CD4-positive, alpha-beta T cell (primary cell): ENCODE measurements at regions of chr5 and their contacts with region 1.

Region 1: DNA sequence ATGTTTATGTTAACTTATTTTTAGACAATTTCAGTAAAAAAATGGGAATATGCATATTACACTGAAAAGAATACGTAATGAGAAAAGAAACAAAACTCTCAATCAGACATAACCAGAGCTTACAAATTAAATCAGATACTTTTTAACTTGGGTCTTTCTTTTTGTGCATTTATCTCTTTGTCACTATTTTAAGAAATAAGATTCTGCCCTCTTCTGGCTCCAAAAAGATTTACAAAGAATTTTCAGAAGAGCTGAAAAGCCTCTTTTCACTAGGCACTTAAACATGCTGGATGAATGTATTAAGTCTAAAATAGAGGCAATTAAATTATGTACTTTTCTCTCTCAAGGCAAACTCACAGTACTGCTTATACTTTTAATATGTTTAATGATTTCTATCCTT is 55.5 kb downstream of the CEP120 start:
- DNase-seq: peak in 1 of 14 experiments; percentile 3
- ATAC-seq: no peak
- H3K4me3 ChIP-seq: no peak overlapping the region
- H3K4me3 Mint-ChIP-seq: no peak overlapping the region
- H3K27ac ChIP-seq: no peak overlapping the region
- H3K27ac Mint-ChIP-seq: no peak overlapping the region
- H3K4me1 ChIP-seq: no peaks in the 10 kb centered on the region
- H3K4me1 Mint-ChIP-seq: no peaks in the 10 kb centered on the region
- H3K27me3 ChIP-seq: no peaks in the 10 kb centered on the region
- H3K27me3 Mint-ChIP-seq: no peaks in the 10 kb centered on the region
- CTCF ChIP-seq: no peak

Region 2: GRCh38 chr5:122192497-122193496 is 1174.9 kb before region 1 on chr5:
- CTCF ChIA-PET with region 1: no interaction called
- POLR2A ChIA-PET with region 1: no interaction called
- intact Hi-C with region 1: loop called in 1 of 2 experiments (anchors 5 kb)
- DNase-seq: peak in 3 of 14 experiments; percentile 17 to 28 (median 27)
- ATAC-seq: no peak
- H3K4me3 ChIP-seq: no peak overlapping the region
- H3K4me3 Mint-ChIP-seq: no peak overlapping the region
- H3K27ac ChIP-seq: no peak overlapping the region
- H3K27ac Mint-ChIP-seq: no peak overlapping the region
- H3K4me1 ChIP-seq: no peaks in the 10 kb centered on the region
- H3K4me1 Mint-ChIP-seq: no peaks in the 10 kb centered on the region
- H3K27me3 ChIP-seq: peaks cover 0 to 3% of the 10 kb centered on the region in 2 experiments
- H3K27me3 Mint-ChIP-seq: peaks cover 30% of the 10 kb centered on the region
- CTCF ChIP-seq: peak; percentile 45